Panc1 (cell line): ENCODE measurements at regions of chr22 and their contacts with region 1.

Region 1: DNA sequence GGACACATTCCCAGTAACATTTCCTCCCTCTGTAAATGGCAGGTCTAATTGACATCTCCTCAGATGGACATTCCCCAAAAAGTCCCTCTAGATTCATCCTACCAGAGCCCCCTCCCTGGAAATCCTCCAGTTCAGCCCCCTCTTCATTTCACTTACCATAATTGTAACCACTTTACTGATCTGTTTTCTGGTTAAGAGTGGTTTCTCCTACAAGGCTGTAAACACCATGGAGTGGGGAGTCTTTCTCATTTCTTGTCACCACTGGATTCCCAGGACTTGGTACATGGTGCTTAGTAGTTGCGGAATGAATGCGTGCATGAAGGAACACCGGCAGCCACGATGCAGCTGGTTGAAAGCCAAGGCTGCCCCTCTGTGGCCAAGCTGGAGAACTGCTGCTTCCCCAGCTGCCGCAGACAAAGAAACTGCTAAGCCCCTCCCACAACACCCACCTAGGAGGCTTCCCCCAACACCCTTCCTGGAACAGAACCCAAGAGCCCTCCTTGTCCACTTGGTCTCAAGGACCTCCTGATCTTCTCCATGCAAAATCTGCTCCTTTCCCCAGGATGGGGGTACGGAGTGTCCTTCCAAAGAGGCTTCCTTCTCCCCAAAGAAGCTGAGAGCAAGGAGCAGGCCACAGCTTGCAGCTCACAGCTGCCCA is 18.6 kb upstream of the SCARF2 start:
- DNase-seq: peak; percentile 50
- ATAC-seq: peak; percentile 95
- H3K4me3 ChIP-seq: no peak overlapping the region
- H3K27ac ChIP-seq: no peak overlapping the region
- H3K4me1 ChIP-seq: no peaks in the 10 kb centered on the region
- H3K27me3 ChIP-seq: no peaks in the 10 kb centered on the region
- CTCF ChIP-seq: peak; percentile 87

Region 2: GRCh38 chr22:20027966-20028854 is 428.0 kb before region 1 on chr22:
- CTCF ChIA-PET with region 1: no interaction called
- POLR2A ChIA-PET with region 1: no interaction called
- in situ Hi-C with region 1: no loop called
- intact Hi-C with region 1: no loop called
- DNase-seq: no peak
- ATAC-seq: peak; percentile 76; the same call in 1 of the 2 replicates
- H3K4me3 ChIP-seq: no peak overlapping the region
- H3K27ac ChIP-seq: no peak overlapping the region
- H3K4me1 ChIP-seq: no peaks in the 10 kb centered on the region
- H3K27me3 ChIP-seq: no peaks in the 10 kb centered on the region
- CTCF ChIP-seq: no peak

Region 3: DNA sequence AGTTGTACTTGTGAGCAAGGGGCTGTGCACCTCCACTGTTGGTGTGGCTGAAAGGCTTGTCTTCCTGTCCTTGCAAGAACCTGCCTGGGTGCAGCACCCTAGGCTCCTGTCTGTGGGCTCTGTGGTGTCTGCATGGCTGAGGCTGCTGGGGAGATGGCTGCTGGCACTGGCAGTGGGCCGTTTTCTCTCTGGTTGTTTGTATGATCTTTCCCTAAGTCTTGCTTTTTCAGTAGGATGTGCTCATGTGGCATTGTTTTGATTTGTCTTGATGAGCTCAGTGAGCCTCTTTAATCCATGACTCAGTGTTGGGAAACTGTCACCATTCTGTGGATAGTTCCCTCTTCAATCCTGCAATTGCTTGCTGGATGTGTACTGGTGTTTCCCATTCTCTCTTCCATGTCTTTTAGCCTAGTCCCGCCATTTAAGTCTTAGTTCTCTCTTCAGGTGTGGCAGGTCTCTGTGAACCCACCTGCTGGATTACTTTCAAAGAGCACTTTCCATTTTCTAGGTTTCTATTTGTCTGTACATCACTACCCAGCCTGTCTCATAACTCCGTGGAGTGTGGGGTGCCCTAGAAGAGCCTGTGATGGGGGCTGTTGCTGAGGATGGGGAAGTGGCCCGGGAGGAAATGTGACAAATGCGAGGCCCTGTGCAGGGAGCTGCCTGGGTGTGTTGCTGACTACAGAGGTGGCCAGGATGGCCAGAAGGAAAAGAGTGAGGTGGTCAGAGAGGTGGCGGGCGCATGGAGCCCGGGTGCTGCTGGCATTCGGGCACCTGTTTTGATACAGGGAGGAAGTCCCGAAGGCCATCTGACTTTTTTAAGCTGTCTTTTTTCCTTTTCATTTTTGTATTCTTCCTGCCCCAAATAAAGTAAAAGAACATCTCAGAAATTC is 365.6 kb before region 1 on chr22:
- CTCF ChIA-PET with region 1: no interaction called
- POLR2A ChIA-PET with region 1: interaction called, 12 read pairs
- in situ Hi-C with region 1: no loop called
- intact Hi-C with region 1: no loop called
- DNase-seq: no peak
- ATAC-seq: no peak
- H3K4me3 ChIP-seq: no peak overlapping the region
- H3K27ac ChIP-seq: no peak overlapping the region
- H3K4me1 ChIP-seq: no peaks in the 10 kb centered on the region
- H3K27me3 ChIP-seq: no peaks in the 10 kb centered on the region
- CTCF ChIP-seq: no peak

Region 4: DNA sequence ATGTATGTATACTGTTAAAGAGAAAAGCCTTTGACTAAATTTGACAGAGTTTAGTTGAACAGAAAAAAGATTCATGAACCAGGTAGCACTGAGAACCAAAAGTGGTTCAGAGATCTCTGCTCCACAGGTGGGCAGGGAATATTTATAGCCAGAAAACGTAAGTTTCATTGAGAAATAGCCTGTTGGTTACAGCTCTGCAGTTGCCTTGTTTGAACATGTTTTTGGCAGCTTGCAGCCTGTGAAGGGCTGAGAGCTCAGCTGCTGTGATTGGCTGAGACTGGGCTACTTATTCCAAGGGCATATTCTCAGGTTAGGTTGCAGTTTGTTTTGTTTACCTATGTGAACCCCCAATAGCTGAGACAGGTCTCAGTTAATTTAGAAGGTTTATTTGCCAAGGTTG is 75.7 kb before region 1 on chr22:
- CTCF ChIA-PET with region 1: no interaction called
- POLR2A ChIA-PET with region 1: no interaction called
- in situ Hi-C with region 1: no loop called
- intact Hi-C with region 1: no loop called
- DNase-seq: no peak
- ATAC-seq: no peak
- H3K4me3 ChIP-seq: no peak overlapping the region
- H3K27ac ChIP-seq: no peak overlapping the region
- H3K4me1 ChIP-seq: no peaks in the 10 kb centered on the region
- H3K27me3 ChIP-seq: no peaks in the 10 kb centered on the region
- CTCF ChIP-seq: no peak

Region 5: DNA sequence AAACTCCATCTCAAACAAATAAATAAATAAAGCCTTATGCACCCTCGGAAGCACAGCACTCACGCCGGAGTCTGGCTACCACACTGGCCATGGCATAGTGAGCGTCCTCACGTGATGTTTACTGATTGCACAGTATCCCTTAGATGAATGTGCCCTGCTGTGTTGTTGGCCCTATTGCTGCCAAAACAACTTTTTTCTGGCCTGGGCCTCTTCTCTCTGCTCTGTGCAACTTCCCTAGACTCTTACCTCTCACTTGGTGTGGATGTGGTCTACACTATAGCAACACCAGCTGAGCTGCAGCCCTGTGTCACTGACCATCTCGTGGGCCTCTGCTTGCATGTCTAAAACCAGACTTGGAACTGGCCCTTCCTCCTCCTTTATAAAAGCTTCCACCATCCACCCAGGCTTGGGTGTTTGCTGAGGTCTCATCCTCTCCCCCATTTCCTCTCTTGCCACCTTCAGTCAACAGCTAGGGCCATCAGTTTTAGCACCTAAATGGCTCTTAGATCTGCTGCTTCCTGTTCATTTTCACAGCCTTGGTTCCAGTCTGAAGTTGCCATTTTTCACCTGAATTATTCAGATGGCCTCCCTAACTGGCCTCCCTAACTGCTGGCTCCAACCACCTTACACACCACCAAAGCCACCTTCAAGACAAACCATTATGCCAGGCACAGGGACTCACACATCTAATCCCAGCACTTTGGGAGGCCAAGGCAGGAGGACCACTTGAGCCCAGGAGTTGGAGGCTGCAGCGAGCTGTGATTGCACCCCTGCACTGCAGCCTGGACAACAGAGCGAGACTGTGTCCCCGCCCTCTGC is 53.0 kb before region 1 on chr22:
- CTCF ChIA-PET with region 1: no interaction called
- POLR2A ChIA-PET with region 1: no interaction called
- in situ Hi-C with region 1: no loop called
- intact Hi-C with region 1: no loop called
- DNase-seq: no peak
- ATAC-seq: no peak
- H3K4me3 ChIP-seq: no peak overlapping the region
- H3K27ac ChIP-seq: no peak overlapping the region
- H3K4me1 ChIP-seq: no peaks in the 10 kb centered on the region
- H3K27me3 ChIP-seq: no peaks in the 10 kb centered on the region
- CTCF ChIP-seq: no peak

Region 6: DNA sequence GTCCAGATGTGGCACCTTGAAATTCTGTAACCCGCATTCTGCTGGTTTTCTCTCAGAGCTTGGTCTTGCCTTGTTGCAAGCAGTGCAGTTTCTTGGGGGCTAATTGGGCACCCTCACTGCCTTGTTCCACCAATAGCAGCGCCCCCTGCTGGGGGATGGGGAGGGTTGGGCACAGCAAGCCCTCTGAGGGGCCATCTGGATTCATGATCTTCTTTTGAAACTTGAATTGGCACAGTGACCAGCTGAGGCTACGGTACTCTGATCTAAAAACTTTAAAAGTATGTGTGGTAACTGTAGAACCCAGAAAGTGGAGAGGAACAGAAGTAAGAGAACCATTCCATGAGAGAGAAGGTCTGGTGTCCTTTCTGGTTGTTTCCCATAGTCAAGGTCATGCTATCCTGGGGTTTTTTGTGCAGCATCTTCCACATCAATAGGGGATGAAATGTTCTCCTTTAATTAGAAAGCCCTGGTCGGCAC is 115.4 kb after region 1 on chr22:
- CTCF ChIA-PET with region 1: no interaction called
- POLR2A ChIA-PET with region 1: no interaction called
- in situ Hi-C with region 1: no loop called
- intact Hi-C with region 1: no loop called
- DNase-seq: peak; percentile 13
- ATAC-seq: no peak
- H3K4me3 ChIP-seq: no peak overlapping the region
- H3K27ac ChIP-seq: no peak overlapping the region
- H3K4me1 ChIP-seq: no peaks in the 10 kb centered on the region
- H3K27me3 ChIP-seq: no peaks in the 10 kb centered on the region
- CTCF ChIP-seq: peak; percentile 84